Activated CD4-positive, alpha-beta memory T cell treated with anti-CD3 and anti-CD28 coated beads, Interleukin-2, amount 10 ng/mL, durations not matched to agents 7 days and 5 days (primary cell): ENCODE measurements at regions of chr6 and their contacts with region 1.

Region 1: GRCh38 chr6:27864906-27865849 is 47.0 kb downstream of the OR2B2 start:
- DNase-seq: peak; percentile 85
- H3K4me3 Mint-ChIP-seq: peak overlapping the region; percentile 81
- H3K27ac Mint-ChIP-seq: peak overlapping the region; percentile 99
- H3K4me1 Mint-ChIP-seq: peaks cover 61% of the 10 kb centered on the region
- H3K27me3 Mint-ChIP-seq: peaks cover 4% of the 10 kb centered on the region

Region 2: DNA sequence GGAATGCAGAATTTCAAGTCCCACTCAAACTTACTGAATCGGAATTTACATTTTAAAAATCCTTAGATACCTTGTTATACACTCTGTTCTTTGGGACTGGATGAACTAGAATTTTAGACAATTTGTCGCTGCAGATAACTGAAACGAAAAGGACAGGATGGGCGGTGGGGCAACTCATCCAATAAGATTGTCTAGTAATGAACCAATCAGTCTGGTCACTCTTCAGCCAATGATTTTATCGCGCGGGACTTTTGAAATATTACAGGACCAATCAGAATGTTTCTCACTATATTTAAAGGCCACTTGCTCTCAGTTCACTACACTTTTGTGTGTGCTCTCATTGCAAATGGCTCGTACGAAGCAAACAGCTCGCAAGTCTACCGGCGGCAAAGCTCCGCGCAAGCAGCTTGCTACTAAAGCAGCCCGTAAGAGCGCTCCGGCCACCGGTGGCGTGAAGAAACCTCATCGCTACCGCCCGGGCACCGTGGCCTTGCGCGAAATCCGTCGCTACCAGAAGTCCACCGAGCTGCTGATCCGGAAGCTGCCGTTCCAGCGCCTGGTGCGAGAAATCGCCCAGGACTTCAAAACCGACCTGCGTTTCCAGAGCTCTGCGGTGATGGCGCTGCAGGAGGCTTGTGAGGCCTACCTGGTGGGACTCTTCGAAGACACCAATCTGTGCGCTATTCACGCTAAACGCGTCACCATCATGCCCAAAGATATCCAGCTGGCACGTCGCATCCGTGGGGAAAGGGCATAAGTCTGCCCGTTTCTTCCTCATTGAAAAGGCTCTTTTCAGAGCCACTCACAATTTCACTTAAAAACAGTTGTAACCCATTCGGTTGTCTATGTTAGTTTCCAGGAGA is 1819.9 kb before region 1 on chr6:
- CTCF ChIA-PET with region 1: no interaction called
- POLR2A ChIA-PET with region 1: interaction called, 69 read pairs
- DNase-seq: peak; percentile 82
- H3K4me3 Mint-ChIP-seq: peak overlapping the region; percentile 79
- H3K27ac Mint-ChIP-seq: peak overlapping the region; percentile 99
- H3K4me1 Mint-ChIP-seq: peaks cover 44% of the 10 kb centered on the region
- H3K27me3 Mint-ChIP-seq: no peaks in the 10 kb centered on the region

Region 3: GRCh38 chr6:26196846-26197648 is 1668.1 kb before region 1 on chr6:
- CTCF ChIA-PET with region 1: interaction called, 3 read pairs
- POLR2A ChIA-PET with region 1: interaction called, 59 read pairs
- DNase-seq: peak; percentile 85
- H3K4me3 Mint-ChIP-seq: peak overlapping the region; percentile 93
- H3K27ac Mint-ChIP-seq: peak overlapping the region; percentile 96
- H3K4me1 Mint-ChIP-seq: peaks cover 49% of the 10 kb centered on the region
- H3K27me3 Mint-ChIP-seq: no peaks in the 10 kb centered on the region

Region 4: DNA sequence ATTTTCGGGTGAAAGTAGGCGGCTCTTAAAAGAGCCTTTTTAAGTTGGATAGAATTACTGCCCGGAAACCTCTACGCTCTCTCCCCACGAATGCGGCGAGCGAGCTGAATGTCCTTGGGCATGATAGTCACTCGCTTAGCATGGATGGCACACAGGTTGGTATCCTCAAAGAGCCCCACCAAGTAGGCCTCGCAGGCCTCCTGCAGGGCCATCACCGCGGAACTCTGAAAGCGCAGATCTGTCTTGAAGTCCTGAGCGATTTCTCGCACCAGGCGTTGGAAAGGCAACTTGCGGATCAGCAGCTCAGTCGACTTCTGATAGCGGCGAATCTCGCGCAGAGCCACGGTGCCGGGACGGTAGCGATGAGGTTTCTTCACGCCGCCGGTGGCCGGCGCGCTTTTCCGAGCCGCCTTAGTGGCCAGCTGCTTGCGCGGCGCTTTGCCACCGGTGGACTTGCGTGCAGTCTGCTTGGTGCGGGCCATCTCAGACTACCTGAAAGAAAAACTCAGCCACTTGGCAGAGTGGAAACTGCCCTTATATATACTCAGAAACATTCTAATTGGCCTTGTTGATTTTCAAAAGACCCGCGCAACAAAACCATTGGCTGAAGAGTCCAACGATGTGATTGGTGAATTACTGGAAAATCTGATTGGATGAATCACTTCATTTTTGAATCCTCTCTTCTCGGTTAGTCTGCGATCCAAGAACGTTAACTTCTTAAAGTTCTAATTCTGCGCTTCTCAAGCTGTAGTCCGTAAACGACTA is 1594.1 kb before region 1 on chr6:
- CTCF ChIA-PET with region 1: no interaction called
- POLR2A ChIA-PET with region 1: interaction called, 61 read pairs
- DNase-seq: peak; percentile 87
- H3K4me3 Mint-ChIP-seq: no peak overlapping the region
- H3K27ac Mint-ChIP-seq: no peak overlapping the region
- H3K4me1 Mint-ChIP-seq: peaks cover 35% of the 10 kb centered on the region
- H3K27me3 Mint-ChIP-seq: no peaks in the 10 kb centered on the region

Region 5: GRCh38 chr6:27177485-27178406 is 687.4 kb before region 1 on chr6:
- CTCF ChIA-PET with region 1: no interaction called
- POLR2A ChIA-PET with region 1: interaction called, 17 read pairs
- DNase-seq: peak; percentile 80
- H3K4me3 Mint-ChIP-seq: peak overlapping the region; percentile 92
- H3K27ac Mint-ChIP-seq: peak overlapping the region; percentile 88
- H3K4me1 Mint-ChIP-seq: peaks cover 20% of the 10 kb centered on the region
- H3K27me3 Mint-ChIP-seq: peaks cover 21% of the 10 kb centered on the region

Region 6: DNA sequence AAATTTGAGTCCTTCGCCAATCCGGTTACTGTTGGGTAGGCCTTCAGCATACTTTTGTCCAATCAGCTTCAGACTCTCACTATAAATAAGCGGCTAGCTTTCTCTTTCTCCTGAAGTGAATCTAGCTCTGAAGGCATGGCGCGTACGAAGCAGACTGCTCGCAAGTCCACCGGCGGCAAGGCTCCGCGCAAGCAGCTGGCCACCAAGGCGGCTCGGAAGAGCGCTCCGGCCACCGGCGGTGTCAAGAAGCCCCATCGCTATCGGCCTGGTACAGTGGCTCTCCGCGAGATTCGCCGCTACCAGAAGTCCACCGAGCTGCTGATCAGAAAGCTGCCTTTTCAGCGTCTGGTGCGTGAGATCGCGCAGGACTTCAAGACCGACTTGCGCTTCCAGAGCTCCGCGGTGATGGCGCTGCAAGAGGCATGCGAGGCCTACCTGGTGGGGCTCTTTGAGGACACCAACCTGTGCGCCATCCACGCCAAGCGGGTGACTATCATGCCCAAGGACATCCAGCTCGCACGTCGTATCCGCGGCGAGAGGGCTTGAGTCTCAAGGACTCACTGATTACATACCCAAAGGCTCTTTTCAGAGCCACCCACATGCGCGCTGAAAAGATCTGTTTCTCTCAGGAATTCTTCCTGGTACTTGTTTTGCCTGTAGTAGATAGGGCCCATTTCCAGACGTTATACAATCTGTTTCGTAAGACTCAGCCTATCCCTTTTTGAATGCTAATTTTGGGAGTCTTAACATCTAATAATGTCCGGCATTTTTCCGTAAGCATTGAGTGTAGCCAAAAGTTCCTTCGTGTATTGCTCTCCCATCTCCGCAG is 55.0 kb before region 1 on chr6:
- CTCF ChIA-PET with region 1: interaction called, 21 read pairs
- POLR2A ChIA-PET with region 1: interaction called, 1,218 read pairs
- DNase-seq: peak; percentile 83
- H3K4me3 Mint-ChIP-seq: peak overlapping the region; percentile 85
- H3K27ac Mint-ChIP-seq: peak overlapping the region; percentile 99
- H3K4me1 Mint-ChIP-seq: peaks cover 62% of the 10 kb centered on the region
- H3K27me3 Mint-ChIP-seq: no peaks in the 10 kb centered on the region

Region 7: GRCh38 chr6:27931209-27931608 is 66.0 kb after region 1 on chr6:
- CTCF ChIA-PET with region 1: no interaction called
- POLR2A ChIA-PET with region 1: no interaction called
- DNase-seq: no peak
- H3K4me3 Mint-ChIP-seq: no peak overlapping the region
- H3K27ac Mint-ChIP-seq: no peak overlapping the region
- H3K4me1 Mint-ChIP-seq: no peaks in the 10 kb centered on the region
- H3K27me3 Mint-ChIP-seq: peaks cover 18% of the 10 kb centered on the region

Region 8: DNA sequence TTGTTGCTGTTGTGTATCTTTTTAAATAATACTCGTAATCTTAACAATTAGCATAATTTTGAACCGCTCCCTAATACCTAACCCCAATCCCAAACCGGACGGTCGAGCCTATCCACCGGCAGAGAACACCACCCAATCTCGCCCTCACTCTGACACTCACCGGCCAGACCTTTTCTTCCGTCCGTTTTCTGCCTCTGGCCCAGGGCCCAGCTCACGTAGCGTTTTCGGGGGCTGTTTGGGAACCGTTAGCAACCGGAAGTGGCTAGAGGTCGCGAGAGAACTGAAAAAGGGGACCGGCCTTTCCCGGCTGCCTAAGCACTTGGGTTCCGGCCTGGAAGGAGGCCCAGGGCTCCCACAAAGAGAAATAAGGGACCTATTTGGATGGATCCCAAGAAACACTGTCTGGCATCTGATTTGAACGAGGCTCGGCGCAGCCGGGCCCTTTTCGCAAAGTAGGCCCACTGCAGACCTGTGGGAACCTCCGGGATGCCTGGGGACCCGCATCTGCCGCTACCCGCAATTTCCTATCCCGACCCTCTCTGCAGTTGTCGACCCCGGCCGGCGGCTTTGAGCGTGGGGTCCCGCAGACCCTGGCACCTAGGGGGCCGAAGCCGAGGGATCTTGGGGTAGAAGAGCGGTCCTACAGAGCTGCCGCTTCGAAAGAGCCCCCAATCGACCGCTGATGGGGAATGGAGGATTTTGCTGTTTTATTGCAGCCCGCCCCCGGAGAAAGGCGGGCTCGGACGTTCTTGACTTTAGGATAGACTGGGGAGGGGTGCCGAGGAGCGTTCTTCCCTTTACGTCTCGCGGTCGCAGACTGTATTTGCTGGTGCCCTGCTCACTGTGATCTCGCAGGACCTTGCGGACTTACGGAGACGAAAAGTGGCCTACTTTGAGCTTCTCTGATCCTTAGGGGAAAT is 271.7 kb after region 1 on chr6:
- CTCF ChIA-PET with region 1: no interaction called
- POLR2A ChIA-PET with region 1: interaction called, 21 read pairs
- DNase-seq: peak; percentile 74
- H3K4me3 Mint-ChIP-seq: peak overlapping the region; percentile 92
- H3K27ac Mint-ChIP-seq: peak overlapping the region; percentile 88
- H3K4me1 Mint-ChIP-seq: peaks cover 71% of the 10 kb centered on the region
- H3K27me3 Mint-ChIP-seq: no peaks in the 10 kb centered on the region

Region 9: DNA sequence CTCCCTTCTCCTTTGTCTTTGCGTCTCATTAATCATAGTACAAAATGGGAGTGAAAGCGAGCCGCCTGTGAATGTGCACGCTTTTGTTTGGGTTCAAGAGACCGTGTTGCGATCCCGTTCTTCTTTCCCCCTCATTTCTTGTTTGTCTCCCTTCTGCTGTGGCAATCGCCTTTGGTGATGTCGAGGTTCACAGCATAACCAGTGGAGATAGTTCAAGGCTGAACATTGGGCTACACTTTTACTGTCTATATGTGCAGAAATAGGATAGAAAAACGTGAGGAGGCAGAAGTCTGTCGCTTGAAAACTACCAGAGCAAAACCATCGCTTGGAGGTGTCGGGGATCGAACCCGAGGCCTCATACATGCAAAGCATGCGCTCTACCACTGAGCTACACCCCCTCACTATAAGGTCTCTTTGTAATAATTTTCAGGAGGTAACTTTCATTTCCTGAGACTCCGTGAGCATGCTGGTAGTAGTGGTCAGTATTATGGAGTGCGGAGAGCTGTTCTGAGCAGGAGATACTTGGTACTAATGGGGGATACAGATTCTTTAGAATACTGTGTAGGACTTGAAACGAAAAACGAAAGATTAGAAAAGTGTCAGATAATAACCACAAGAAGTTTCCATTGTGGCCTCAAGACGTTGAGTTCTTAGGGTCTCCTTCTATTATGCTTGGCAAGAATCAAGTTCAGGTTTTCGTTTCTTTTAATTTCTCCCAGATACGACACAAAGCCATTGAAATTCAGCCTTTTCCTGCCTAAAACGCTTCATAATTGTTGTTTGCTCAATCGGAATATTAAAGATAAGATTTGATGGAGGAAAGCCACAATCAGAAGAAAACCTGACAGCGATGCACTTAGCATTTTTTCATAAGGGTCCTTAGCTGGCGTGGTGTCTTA is 952.0 kb after region 1 on chr6:
- CTCF ChIA-PET with region 1: no interaction called
- POLR2A ChIA-PET with region 1: no interaction called
- DNase-seq: no peak
- H3K4me3 Mint-ChIP-seq: peak overlapping the region; percentile 7
- H3K27ac Mint-ChIP-seq: no peak overlapping the region
- H3K4me1 Mint-ChIP-seq: peaks cover 15% of the 10 kb centered on the region
- H3K27me3 Mint-ChIP-seq: peaks cover 72% of the 10 kb centered on the region